ENCODE measurements at regions of chr1 and their contacts with region 1.

Region 1: DNA sequence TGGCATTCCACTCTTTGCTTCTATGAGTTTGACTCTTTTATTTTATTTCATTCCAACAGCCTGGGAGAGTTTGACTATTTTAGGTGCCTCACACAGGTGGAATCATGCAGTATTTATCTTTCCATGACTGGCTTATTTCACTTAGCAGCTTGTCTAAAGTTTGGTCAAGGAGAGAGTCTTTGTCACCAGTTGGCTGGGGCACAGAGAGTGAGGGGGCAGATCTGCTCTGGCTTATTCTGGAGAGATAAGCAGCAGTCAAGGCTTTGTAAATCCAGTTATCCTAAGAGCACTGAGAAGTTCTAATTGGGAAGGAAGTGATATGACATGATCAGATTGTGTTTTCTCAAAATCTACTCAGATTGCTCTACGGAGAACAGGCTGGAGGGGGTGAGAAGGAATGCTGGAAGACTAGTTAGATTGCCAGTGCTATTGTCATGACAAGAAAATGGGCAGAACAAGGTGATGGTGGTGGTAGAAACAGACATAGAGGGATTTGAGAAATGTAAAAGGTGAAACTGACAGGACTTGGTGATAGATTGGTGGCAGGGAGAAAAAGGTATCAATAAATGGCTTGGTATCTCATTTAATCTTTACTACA is 12.2 kb upstream of the CTTNBP2NL start:
- DNase-seq: no peak
- H3K4me3 ChIP-seq: no peak overlapping the region
- H3K27ac ChIP-seq: no peak overlapping the region
- H3K4me1 ChIP-seq: peaks cover 0 to 3% (median 0%) of the 10 kb centered on the region in 4 experiments; a peak in 3 of 7 replicates
- H3K27me3 ChIP-seq: no peaks in the 10 kb centered on the region
- CTCF ChIP-seq: no peak
- EP300 ChIP-seq: no peak
- POLR2A ChIP-seq: no peak
- RAD21 ChIP-seq: no peak

Region 2: DNA sequence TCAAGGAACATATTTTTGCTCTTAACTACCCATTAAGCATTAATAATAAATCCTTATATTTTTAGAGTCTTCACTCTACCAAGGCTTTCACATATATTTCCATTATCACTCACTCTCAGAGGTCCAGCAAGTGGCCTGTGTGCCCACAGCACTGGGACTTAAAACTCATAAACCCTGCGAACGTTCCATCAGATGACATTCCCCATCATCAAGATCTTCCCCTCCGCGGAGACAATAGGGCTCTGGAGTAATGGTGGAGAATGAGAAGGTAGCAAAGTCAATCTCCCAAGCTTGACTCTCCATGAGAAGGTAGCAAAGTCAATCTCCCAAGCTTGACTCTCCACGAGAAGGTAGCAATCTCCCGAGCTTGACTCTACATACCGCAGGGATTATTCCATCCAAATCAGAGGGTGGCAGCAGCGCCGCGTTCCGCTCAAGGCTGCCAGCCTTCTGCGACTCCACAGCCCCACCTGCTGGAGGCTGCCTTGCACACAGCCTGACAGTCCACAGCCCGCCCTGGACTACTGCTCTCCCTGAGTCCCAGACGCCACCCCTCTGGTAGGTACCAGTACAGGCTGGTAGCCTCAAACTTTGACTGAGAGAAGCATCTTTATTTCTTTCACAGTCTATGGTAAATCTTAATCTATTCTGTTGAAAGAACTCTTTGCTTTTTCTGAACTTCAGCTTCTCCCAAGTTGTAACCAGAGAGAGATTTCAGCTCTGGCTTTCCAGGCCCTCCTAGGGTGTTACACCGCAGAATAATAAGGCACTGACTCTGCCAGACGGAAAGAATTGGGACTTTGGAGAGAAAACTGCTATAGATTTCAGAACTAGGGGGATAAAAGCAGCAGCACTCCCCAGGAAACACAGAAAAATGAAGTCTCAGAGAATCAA is 14.2 kb before region 1 on chr1:
- CTCF ChIA-PET with region 1: interaction called, 23 read pairs
- POLR2A ChIA-PET with region 1: no interaction called
- DNase-seq: peak; percentile 78 to 98
- H3K4me3 ChIP-seq: no peak overlapping the region
- H3K27ac ChIP-seq: no peak overlapping the region
- H3K4me1 ChIP-seq: no peaks in the 10 kb centered on the region
- H3K27me3 ChIP-seq: no peaks in the 10 kb centered on the region
- CTCF ChIP-seq: peak; percentile 99 to 100 (median 99)
- EP300 ChIP-seq: no peak
- POLR2A ChIP-seq: no peak
- RAD21 ChIP-seq: peak; percentile 94 to 98

Measured in H1 (cell line).